ENCODE measurements at regions of chr11 and their contacts with region 1.

Region 1: GRCh38 chr11:64269380-64270234 is 14.9 kb downstream of the BAD start:
- DNase-seq: peak; percentile 98
- ATAC-seq: peak; percentile 83

Region 2: GRCh38 chr11:64284048-64284961 is 14.7 kb after region 1 on chr11 and contains the start of gene BAD:
- intact Hi-C with region 1: loop called (anchors 2 kb)
- DNase-seq: peak; percentile 97
- ATAC-seq: peak; percentile 91
- total RNA-seq, gene BAD: 90.1 TPM

Region 3: DNA sequence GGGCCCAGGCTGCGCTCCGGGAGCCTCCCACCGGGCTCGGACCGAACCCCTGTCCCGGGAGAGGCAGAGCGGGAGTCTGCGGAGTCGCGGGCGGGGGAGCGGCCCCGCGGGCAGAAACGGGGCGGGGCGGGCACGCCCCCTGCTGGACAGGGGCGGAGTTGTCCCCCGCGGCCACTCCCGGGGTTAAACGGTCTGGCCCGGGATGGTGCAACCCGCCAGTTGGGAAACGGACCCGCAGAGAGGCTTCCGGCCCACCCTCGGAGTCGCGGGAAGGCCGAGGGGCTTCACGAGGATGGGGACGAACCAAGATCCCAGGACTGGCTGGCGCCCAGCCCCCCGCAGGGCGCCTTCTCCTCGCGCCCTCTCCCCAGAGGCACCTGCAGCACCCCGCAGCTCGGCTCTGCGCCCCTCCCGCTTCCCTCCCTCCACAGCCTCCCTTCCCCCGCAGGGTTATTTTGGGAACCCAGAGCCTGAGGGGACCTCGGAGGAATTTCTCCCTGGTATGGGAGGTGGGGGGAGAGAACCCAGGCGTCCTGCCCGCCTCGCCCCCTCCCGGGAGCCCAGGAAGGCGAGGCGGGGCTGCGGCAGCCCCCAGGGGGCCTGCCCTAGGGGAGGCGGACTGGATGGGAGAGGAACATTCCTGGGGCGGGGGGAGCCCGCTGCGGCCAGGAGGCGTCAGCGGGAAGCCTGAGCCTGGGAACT is 473.4 kb after region 1 on chr11:
- intact Hi-C with region 1: no loop called
- DNase-seq: peak; percentile 91
- ATAC-seq: peak; percentile 68

Measured in Right ventricle myocardium superior (tissue), 1 donor.